Activated CD4-positive, alpha-beta T cell treated with anti-CD3 and anti-CD28 coated beads for 36 hours (primary cell): ENCODE measurements at regions of chr1 and their contacts with region 1.

Region 1: DNA sequence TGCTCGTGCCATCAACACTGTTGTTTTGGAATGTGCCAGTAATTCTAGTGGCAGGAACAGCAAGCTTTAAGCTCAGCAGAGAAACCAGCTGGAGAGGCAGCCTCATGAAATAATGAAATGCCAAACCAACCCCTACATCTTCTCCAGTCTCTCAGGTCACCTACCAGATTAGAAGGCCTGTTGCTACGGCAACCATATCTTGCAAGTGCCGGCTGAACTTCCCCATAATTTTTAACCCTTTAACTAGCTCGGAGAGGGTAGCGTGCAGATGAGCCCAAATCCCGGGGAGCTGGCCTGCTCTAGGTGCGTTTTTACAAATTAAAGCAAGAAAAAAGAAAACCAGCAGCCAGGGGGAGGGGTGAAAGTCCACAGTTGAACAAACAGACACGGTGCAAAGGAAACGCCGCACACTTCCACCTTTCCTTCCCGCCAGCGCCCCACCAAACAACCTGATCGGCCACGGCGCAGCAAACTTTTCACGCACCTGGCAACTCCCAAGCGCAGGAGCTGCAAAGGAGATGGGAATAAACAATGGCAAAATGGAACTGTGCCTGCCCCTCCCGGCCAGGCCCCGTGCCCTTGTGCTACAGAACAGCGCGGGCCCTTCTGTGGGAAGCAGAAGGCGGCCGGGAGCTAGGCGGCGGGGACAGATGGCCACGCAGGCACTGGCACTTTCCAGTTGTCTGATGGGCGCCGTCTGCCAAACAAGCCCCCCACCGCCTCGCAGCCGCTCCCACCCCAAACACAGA is 50.1 kb downstream of the SSBP3 start:
- DNase-seq: peak; percentile 33
- ATAC-seq: no peak
- H3K4me3 Mint-ChIP-seq: peak overlapping the region; percentile 77
- H3K27ac Mint-ChIP-seq: peak overlapping the region; percentile 95
- H3K4me1 Mint-ChIP-seq: peaks cover 89% of the 10 kb centered on the region
- H3K27me3 Mint-ChIP-seq: no peaks in the 10 kb centered on the region

Region 2: GRCh38 chr1:54287176-54287650 is 68.9 kb before region 1 on chr1:
- CTCF ChIA-PET with region 1: interaction called, 5 read pairs
- POLR2A ChIA-PET with region 1: no interaction called
- intact Hi-C with region 1: loop called (anchors 2 to 10 kb)
- DNase-seq: peak; percentile 90
- ATAC-seq: peak; percentile 88
- H3K4me3 Mint-ChIP-seq: peak overlapping the region; percentile 59
- H3K27ac Mint-ChIP-seq: peak overlapping the region; percentile 97
- H3K4me1 Mint-ChIP-seq: peaks cover 94% of the 10 kb centered on the region
- H3K27me3 Mint-ChIP-seq: no peaks in the 10 kb centered on the region

Region 3: GRCh38 chr1:54323324-54323739 is 32.8 kb before region 1 on chr1:
- CTCF ChIA-PET with region 1: no interaction called
- POLR2A ChIA-PET with region 1: no interaction called
- intact Hi-C with region 1: no loop called
- DNase-seq: no peak
- ATAC-seq: no peak
- H3K4me3 Mint-ChIP-seq: no peak overlapping the region
- H3K27ac Mint-ChIP-seq: no peak overlapping the region
- H3K4me1 Mint-ChIP-seq: peaks cover 46% of the 10 kb centered on the region
- H3K27me3 Mint-ChIP-seq: no peaks in the 10 kb centered on the region

Region 4: DNA sequence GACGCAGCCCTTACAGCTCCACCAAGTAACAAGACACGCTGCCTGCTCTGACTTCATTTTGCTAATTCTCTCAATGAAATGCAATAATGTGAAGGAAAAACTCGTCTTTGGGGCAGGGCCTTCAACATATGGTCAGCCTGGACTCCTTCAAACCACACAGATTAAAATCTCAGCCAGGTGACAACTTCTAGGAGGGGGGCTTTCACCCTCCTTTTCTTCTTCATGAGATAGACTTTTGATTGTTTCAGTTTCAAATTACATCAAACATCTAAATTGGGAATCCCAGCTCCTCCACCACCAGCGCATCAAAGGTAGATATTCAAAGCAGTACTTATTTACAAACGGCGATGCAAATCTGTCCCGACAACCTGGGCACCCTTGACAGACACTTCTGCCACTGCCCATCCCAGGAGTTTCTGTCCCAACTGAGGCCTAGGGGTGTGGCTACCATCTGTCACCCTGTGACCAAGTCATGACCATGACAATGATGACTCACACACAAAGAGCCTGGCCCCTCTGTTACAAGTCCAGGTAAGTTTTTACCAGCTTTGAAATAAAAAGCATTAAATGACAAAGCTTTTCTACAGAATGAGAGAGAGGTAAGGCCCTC is 20.4 kb after region 1 on chr1:
- CTCF ChIA-PET with region 1: no interaction called
- POLR2A ChIA-PET with region 1: no interaction called
- intact Hi-C with region 1: loop called in 1 of 2 experiments (anchors 1 kb)
- DNase-seq: peak; percentile 62
- ATAC-seq: peak; percentile 77
- H3K4me3 Mint-ChIP-seq: no peak overlapping the region
- H3K27ac Mint-ChIP-seq: peak overlapping the region; percentile 56
- H3K4me1 Mint-ChIP-seq: peaks cover 87% of the 10 kb centered on the region
- H3K27me3 Mint-ChIP-seq: no peaks in the 10 kb centered on the region

Region 5: DNA sequence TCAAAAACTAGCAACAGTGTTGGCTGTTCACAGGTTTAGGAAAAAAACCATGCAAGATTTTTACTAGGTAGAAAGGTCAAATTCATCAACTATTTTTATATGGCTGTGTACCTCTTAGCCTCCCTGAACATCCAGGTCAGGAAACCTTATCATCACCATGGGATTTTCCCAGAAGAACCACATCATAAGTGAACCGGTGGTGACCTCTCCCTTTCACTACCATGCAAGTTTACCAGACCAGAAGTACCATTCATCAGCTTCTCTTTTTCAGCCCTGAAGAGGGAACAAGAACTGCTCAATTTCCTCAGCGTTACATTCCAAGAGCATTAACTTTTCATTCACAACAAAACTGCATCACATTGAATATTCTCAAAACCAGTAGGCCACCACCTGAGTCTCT is 44.2 kb after region 1 on chr1:
- CTCF ChIA-PET with region 1: interaction called, 4 read pairs
- POLR2A ChIA-PET with region 1: no interaction called
- intact Hi-C with region 1: loop called (anchors 1 to 5 kb)
- DNase-seq: peak; percentile 67
- ATAC-seq: peak; percentile 70
- H3K4me3 Mint-ChIP-seq: peak overlapping the region; percentile 15
- H3K27ac Mint-ChIP-seq: peak overlapping the region; percentile 64
- H3K4me1 Mint-ChIP-seq: peaks cover 71% of the 10 kb centered on the region
- H3K27me3 Mint-ChIP-seq: no peaks in the 10 kb centered on the region

Region 6: GRCh38 chr1:54429179-54429520 is 73.0 kb after region 1 on chr1:
- CTCF ChIA-PET with region 1: no interaction called
- POLR2A ChIA-PET with region 1: no interaction called
- intact Hi-C with region 1: no loop called
- DNase-seq: no peak
- ATAC-seq: no peak
- H3K4me3 Mint-ChIP-seq: no peak overlapping the region
- H3K27ac Mint-ChIP-seq: no peak overlapping the region
- H3K4me1 Mint-ChIP-seq: no peaks in the 10 kb centered on the region
- H3K27me3 Mint-ChIP-seq: no peaks in the 10 kb centered on the region

Region 7: DNA sequence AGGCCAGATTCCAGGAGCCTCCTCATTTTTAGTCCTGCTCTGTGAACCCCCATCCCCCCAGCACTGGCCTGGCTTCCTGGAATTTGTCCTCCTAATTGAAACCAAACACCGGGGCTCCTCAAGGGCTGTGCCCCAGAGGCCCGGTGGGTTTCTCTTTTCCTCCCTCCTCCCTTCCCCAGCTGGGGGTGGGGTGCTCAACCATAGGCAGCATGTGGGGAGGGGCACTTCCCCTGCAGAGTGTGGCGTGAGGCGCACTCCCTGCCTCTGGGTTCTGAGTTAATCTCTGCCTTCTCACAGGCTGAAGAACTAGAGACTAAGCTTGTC is 124.4 kb after region 1 on chr1:
- CTCF ChIA-PET with region 1: no interaction called
- POLR2A ChIA-PET with region 1: interaction called, 4 read pairs
- intact Hi-C with region 1: loop called in 1 of 2 experiments (anchors 5 kb)
- DNase-seq: no peak
- ATAC-seq: no peak
- H3K4me3 Mint-ChIP-seq: no peak overlapping the region
- H3K27ac Mint-ChIP-seq: peak overlapping the region; percentile 40
- H3K4me1 Mint-ChIP-seq: peaks cover 59% of the 10 kb centered on the region
- H3K27me3 Mint-ChIP-seq: no peaks in the 10 kb centered on the region